ENCODE measurements at regions of chr1 and their contacts with region 1.

Region 1: DNA sequence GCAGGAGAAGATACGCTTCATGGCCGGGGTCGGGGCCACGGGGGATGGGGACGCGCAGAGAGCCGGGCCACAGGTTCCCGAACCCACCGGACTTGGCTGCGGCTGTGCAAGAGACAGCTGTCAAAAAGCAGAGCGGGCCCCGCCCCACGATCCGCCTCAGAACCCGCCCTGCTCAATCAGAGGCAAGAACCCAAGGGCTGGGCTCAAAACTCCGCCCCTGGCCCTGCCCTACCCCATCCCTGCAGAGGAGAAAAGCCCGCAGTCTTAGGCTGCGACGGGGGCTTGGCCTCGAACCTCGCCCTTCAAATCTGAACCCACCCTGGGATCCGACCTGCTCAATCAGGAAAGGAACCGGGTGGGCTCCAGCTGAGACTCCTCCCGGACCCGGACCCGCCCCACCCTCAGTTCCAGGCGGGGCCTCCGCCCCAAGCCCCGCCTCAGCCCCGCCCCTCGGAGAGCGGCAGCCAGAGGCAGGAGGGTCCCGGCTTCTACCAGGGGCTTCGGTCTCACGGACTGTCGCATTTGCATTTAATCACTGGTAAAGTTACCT is at the start of gene ANKRD35:
- DNase-seq: peak; percentile 82
- ATAC-seq: peak; percentile 99
- H3K4me3 Mint-ChIP-seq: peak within 1 kb of the TSS; percentile 88
- H3K27ac Mint-ChIP-seq: no peak within 1 kb of the TSS
- H3K4me1 Mint-ChIP-seq: peaks cover 19% of the 10 kb centered on the region
- H3K27me3 Mint-ChIP-seq: peaks cover 19% of the 10 kb centered on the region
- CTCF ChIP-seq: no peak
- total RNA-seq, gene ANKRD35: not detected in 2 replicates

Region 2: DNA sequence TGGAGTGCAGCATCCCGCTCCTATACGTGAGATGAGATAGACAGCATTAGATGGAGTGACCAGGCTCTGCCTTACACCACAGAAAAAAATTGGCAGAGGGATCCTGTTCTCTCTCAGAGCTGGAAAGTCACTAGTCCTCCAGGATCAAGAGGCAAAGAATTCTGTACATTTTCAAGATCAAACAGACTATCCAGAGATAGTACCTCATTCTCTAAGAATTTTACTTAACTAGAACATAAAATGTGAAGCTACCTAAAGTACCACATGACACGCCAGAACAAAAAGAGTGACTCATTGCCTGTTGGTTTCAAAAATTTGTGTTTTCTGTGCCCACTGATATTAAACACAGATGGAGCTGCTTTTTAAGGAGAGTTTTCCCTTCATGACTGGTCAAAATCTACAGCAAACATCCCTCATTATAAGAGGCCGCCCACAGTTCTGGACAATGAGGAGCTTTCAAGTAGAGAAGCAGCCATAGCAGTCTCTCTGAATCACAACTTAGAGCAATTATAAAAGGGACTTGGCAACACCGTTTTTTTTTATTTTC is 134.2 kb before region 1 on chr1:
- CTCF ChIA-PET with region 1: no interaction called
- POLR2A ChIA-PET with region 1: no interaction called
- intact Hi-C with region 1: no loop called
- DNase-seq: no peak
- ATAC-seq: no peak
- H3K4me3 Mint-ChIP-seq: no peak overlapping the region
- H3K27ac Mint-ChIP-seq: no peak overlapping the region
- H3K4me1 Mint-ChIP-seq: no peaks in the 10 kb centered on the region
- H3K27me3 Mint-ChIP-seq: no peaks in the 10 kb centered on the region
- CTCF ChIP-seq: no peak

Region 3: GRCh38 chr1:145871994-145872924 is 13.6 kb before region 1 on chr1:
- CTCF ChIA-PET with region 1: no interaction called
- POLR2A ChIA-PET with region 1: interaction called, 14 read pairs
- intact Hi-C with region 1: no loop called
- DNase-seq: peak; percentile 45
- ATAC-seq: peak; percentile 81
- H3K4me3 Mint-ChIP-seq: peak overlapping the region; percentile 83
- H3K27ac Mint-ChIP-seq: no peak overlapping the region
- H3K4me1 Mint-ChIP-seq: peaks cover 11% of the 10 kb centered on the region
- H3K27me3 Mint-ChIP-seq: peaks cover 28% of the 10 kb centered on the region
- CTCF ChIP-seq: no peak

Region 4: GRCh38 chr1:145901318-145902021 is 15.7 kb after region 1 on chr1:
- CTCF ChIA-PET with region 1: no interaction called
- POLR2A ChIA-PET with region 1: no interaction called
- intact Hi-C with region 1: no loop called
- DNase-seq: no peak
- ATAC-seq: no peak
- H3K4me3 Mint-ChIP-seq: no peak overlapping the region
- H3K27ac Mint-ChIP-seq: no peak overlapping the region
- H3K4me1 Mint-ChIP-seq: no peaks in the 10 kb centered on the region
- H3K27me3 Mint-ChIP-seq: no peaks in the 10 kb centered on the region
- CTCF ChIP-seq: no peak

Region 5: DNA sequence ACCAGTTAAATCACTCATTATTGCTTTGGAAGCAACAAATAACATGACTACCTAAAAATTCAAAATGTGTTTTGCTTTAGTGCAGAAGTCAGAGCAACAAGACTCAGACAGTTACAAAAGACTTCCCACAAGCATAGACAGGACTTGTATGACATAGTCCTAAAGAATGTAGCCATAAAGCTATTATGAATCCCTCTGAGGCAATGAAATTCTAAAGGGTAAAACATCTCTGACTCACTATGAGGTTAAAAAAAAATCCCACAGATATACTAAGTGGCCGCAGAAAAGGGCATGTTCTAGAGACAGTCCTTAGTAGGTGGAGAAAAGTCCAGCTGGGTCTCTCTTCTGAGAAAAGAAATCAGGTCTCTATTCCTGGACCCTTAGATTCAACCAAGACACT is 1281.5 kb after region 1 on chr1:
- CTCF ChIA-PET with region 1: no interaction called
- POLR2A ChIA-PET with region 1: no interaction called
- intact Hi-C with region 1: no loop called
- DNase-seq: no peak
- ATAC-seq: no peak
- H3K4me3 Mint-ChIP-seq: no peak overlapping the region
- H3K27ac Mint-ChIP-seq: no peak overlapping the region
- H3K4me1 Mint-ChIP-seq: peaks cover 14% of the 10 kb centered on the region
- H3K27me3 Mint-ChIP-seq: no peaks in the 10 kb centered on the region
- CTCF ChIP-seq: no peak

Measured in activated B cell treated with CpG ODN at 0.5 μM for 24 hours (primary cell).